Activated T-helper 1 cell treated with anti-CD3 and anti-CD28 coated beads, Interleukin-12 subunit alpha, Interleukin-12 subunit beta, Interleukin-2, Interleukin-4 antibody, amounts not matched to agents 30 ng/mL and 10 ng/mL and 1 ng/mL, durations not matched to agents 14 hours and 24 hours and 36 hours (primary cell): ENCODE measurements at regions of chr5 and their contacts with region 1.

Region 1: DNA sequence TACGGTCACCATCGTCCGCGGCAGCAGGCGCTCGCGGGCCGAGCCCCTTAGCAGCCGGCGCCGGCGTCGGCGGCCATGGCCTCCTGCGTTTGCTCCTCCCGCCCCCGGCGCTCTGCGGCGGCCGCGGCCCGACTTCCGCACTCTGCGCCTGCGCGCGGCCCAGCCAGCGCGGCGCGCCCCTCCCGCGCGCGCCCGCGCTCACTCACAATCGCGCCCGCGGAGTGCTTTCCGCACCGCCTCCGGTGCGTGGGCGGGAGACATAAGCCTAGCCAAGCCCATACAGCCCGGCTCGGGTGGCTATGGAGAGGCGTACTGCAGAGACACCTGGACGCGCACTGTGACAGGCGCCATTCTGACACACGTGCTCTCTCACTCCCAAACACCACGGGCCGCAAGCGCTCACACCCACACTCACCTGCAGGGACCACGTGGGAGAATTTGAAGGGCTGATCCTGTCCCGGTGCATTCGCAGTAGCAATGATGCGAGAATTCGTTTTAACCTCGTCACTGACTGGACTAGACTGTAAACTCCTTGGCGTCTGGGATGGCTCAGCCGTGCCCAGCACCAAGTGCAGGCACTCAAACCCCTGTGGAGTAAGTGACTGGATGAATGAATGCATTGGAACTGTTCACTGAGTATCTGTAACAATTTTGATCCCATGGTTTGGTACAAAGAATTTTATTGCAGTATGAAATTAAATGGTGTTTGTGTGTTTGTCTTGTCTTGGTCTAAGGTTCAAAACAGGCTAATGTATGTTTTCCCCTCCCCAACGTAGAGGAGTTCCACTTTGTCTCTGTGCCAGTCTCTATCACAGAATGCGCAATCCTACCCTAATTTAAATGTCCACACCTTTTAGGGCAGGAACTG is at the start of gene RNF145:
- DNase-seq: peak; percentile 91
- H3K4me3 Mint-ChIP-seq: peak within 1 kb of the TSS; percentile 97
- H3K27ac Mint-ChIP-seq: peak within 1 kb of the TSS; percentile 97
- H3K4me1 Mint-ChIP-seq: peaks cover 42% of the 10 kb centered on the region
- H3K27me3 Mint-ChIP-seq: peaks cover 4% of the 10 kb centered on the region
- total RNA-seq, gene RNF145: 179 TPM in 2 replicates

Region 2: DNA sequence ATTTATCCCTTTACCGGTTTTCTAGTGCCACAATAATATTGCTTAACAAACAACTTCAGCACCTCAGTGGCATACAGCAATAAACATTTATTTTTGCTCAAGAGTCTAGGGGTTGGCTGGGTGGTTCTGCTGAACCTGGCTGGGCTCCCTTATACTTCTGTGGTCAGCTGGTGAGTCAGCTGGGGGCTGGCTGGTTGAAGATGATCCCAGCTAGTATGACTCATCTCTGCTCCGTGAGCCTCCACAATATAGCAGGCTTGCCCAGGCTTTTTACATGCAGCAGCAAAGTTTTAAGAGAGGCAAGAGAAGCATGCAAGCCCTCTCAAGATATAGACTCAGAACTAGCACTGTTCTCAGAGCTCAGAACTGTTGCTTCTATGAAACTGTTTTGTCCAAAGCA is 827.2 kb before region 1 on chr5:
- intact Hi-C with region 1: no loop called
- DNase-seq: peak; percentile 11
- H3K4me3 Mint-ChIP-seq: no peak overlapping the region
- H3K27ac Mint-ChIP-seq: no peak overlapping the region
- H3K4me1 Mint-ChIP-seq: no peaks in the 10 kb centered on the region
- H3K27me3 Mint-ChIP-seq: peaks cover 2% of the 10 kb centered on the region

Region 3: GRCh38 chr5:158819840-158820620 is 389.6 kb before region 1 on chr5:
- intact Hi-C with region 1: loop called (anchors 2 kb)
- DNase-seq: no peak
- H3K4me3 Mint-ChIP-seq: no peak overlapping the region
- H3K27ac Mint-ChIP-seq: peak overlapping the region; percentile 80
- H3K4me1 Mint-ChIP-seq: peaks cover 55% of the 10 kb centered on the region
- H3K27me3 Mint-ChIP-seq: no peaks in the 10 kb centered on the region

Region 4: DNA sequence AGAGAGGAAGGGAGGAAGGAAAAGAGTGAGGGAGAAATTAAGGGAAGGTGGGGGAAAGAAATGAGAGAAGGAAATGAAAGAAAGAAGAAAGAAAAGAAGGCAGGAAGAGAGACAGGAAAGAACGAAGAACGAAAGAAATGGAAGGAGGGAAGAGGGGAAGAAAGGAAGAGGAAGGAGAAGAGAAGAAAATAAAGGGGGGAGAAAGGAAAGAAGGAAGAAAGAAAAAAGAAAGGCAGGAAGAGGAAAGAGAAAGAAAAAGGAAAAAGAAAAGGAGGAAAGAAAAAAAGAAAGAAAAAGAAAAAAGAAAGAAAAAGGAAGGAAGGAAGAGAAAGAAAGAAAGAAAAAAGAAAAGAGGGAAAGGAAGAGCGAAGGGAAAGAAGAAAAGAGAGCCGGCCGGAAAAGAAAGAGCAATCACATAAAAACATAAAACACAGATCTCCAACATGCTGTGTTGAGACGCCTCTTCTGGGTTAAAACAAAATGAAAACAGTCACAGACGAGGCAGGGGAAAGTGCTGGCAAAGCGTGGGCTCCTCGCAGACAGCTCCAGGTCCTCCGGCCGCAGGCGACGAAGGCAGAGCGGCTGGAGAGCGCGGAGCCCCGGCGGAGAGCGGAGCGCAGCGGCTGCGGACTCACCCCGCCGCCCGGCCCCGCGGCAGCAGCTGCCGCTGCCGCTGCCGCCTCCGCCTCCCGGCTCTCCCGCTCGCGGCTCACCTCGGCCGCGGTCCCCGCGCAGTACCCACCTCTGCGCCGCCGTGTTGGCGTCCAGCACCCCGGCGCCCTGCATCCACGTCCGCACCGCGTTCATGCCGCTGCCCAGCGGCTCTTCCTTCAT is 110.9 kb before region 1 on chr5:
- intact Hi-C with region 1: no loop called
- DNase-seq: peak; percentile 41
- H3K4me3 Mint-ChIP-seq: peak overlapping the region; percentile 86
- H3K27ac Mint-ChIP-seq: no peak overlapping the region
- H3K4me1 Mint-ChIP-seq: peaks cover 40% of the 10 kb centered on the region
- H3K27me3 Mint-ChIP-seq: peaks cover 80% of the 10 kb centered on the region

Region 5: DNA sequence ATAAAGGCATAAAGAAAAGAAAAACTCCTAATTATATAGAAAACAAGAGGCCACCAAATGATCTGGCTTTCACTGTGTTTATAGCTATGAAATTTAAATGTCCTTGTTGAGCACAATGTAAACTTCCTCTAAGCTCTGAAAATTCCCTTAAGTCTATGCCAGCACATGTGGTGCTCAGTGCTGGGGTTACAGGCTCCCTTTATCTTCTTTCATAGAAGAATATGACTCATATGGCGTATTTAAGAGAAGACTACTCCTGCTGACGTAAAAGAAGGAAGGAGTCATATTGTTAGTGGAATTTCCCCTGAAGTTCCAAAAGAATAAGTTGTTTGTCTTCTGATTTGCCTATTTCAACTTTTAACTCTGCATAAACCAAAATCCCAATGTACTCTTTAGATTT is 30.7 kb before region 1 on chr5:
- intact Hi-C with region 1: loop called (anchors 1 kb)
- DNase-seq: no peak
- H3K4me3 Mint-ChIP-seq: peak overlapping the region; percentile 66
- H3K27ac Mint-ChIP-seq: peak overlapping the region; percentile 91
- H3K4me1 Mint-ChIP-seq: peaks cover 93% of the 10 kb centered on the region
- H3K27me3 Mint-ChIP-seq: no peaks in the 10 kb centered on the region

Region 6: DNA sequence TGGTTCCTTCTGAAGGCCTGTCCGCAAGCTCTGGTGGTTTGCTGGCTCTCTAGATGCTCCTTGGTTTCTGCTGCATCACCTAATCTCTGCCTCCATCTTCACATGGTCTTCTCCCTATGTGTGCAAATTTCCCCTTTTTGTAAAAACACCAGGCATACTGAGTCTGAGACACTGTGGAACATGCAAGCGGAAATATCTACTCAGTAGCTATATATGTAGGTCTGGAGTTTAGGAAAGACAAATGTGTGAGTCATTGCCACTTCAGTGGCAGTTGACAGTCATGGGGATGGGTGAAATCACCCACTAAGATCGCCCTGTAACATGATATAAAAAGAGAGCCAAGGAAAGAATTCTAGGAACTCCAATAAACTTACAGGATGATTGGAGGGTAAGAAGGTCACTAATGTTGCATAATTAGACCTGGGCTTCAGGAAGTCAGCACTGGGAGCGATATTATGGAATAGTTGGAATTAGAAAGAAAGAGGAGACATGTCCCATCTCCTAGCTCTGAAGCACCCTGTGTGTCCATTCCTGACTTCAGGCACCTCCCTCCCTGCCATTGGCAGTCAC is 30.7 kb after region 1 on chr5:
- intact Hi-C with region 1: loop called (anchors 1 kb)
- DNase-seq: no peak
- H3K4me3 Mint-ChIP-seq: peak overlapping the region; percentile 11
- H3K27ac Mint-ChIP-seq: peak overlapping the region; percentile 61
- H3K4me1 Mint-ChIP-seq: peaks cover 41% of the 10 kb centered on the region
- H3K27me3 Mint-ChIP-seq: peaks cover 5% of the 10 kb centered on the region

Region 7: DNA sequence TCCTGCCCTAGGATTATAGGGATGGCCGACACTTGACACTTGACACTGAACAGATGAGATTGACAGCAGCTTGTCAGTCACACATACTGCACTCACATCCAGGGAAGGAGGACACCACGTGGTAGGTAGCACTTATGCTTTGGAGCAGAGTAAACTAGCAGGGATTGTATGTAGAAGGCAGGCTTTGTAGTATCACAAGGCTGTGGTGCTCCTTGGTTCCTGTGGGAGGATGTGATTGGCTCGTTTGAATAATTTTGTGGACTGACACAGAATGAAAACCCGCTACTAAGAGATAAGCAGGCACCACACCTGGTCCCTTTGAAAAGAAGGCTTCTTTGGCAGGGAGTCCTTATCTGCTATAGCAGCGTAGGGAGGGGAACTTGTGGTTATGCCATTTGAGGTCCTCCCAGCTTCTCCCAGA is 184.2 kb after region 1 on chr5:
- intact Hi-C with region 1: no loop called
- DNase-seq: no peak
- H3K4me3 Mint-ChIP-seq: no peak overlapping the region
- H3K27ac Mint-ChIP-seq: no peak overlapping the region
- H3K4me1 Mint-ChIP-seq: peaks cover 6% of the 10 kb centered on the region
- H3K27me3 Mint-ChIP-seq: peaks cover 36% of the 10 kb centered on the region

Region 8: GRCh38 chr5:159412284-159413046 is 202.8 kb after region 1 on chr5:
- intact Hi-C with region 1: loop called (anchors 2 kb)
- DNase-seq: peak; percentile 81
- H3K4me3 Mint-ChIP-seq: peak overlapping the region; percentile 47
- H3K27ac Mint-ChIP-seq: peak overlapping the region; percentile 80
- H3K4me1 Mint-ChIP-seq: peaks cover 64% of the 10 kb centered on the region
- H3K27me3 Mint-ChIP-seq: peaks cover 13% of the 10 kb centered on the region

Region 9: GRCh38 chr5:160008877-160009590 is 799.4 kb after region 1 on chr5 and contains the start of gene TTC1:
- intact Hi-C with region 1: loop called (anchors 1 kb)
- DNase-seq: peak; percentile 90
- H3K4me3 Mint-ChIP-seq: peak within 1 kb of the TSS; percentile 91
- H3K27ac Mint-ChIP-seq: peak within 1 kb of the TSS; percentile 91
- H3K4me1 Mint-ChIP-seq: peaks cover 29% of the 10 kb centered on the region
- H3K27me3 Mint-ChIP-seq: peaks cover 4% of the 10 kb centered on the region
- total RNA-seq, gene TTC1: 65.9 and 69.1 TPM in 2 replicates

Region 10: GRCh38 chr5:160467555-160468362 is 1258.1 kb after region 1 on chr5:
- intact Hi-C with region 1: loop called (anchors 2 kb)
- DNase-seq: peak; percentile 85
- H3K4me3 Mint-ChIP-seq: peak overlapping the region; percentile 100
- H3K27ac Mint-ChIP-seq: peak overlapping the region; percentile 100
- H3K4me1 Mint-ChIP-seq: peaks cover 68% of the 10 kb centered on the region
- H3K27me3 Mint-ChIP-seq: no peaks in the 10 kb centered on the region

Region 11: GRCh38 chr5:160555961-160556631 is 1346.4 kb after region 1 on chr5:
- intact Hi-C with region 1: no loop called
- DNase-seq: no peak
- H3K4me3 Mint-ChIP-seq: no peak overlapping the region
- H3K27ac Mint-ChIP-seq: no peak overlapping the region
- H3K4me1 Mint-ChIP-seq: no peaks in the 10 kb centered on the region
- H3K27me3 Mint-ChIP-seq: peaks cover 6% of the 10 kb centered on the region